ENCODE measurements at regions of chr9 and their contacts with region 1.

Region 1: GRCh38 chr9:87201351-87201751 is 254.0 kb upstream of the GAS1 start:
- DNase-seq: no peak
- ATAC-seq: no peak
- H3K4me3 ChIP-seq: no peak overlapping the region
- H3K4me3 Mint-ChIP-seq: no peak overlapping the region
- H3K27ac ChIP-seq: no peak overlapping the region
- H3K27ac Mint-ChIP-seq: no peak overlapping the region
- H3K4me1 ChIP-seq: no peaks in the 10 kb centered on the region
- H3K4me1 Mint-ChIP-seq: no peaks in the 10 kb centered on the region
- H3K27me3 ChIP-seq: peaks cover 4 to 7% of the 10 kb centered on the region in 2 experiments
- H3K27me3 Mint-ChIP-seq: peaks cover 16% of the 10 kb centered on the region
- CTCF ChIP-seq: no peak

Region 2: GRCh38 chr9:86749894-86750255 is 451.5 kb before region 1 on chr9:
- CTCF ChIA-PET with region 1: no interaction called
- POLR2A ChIA-PET with region 1: no interaction called
- intact Hi-C with region 1: loop called in 1 of 2 experiments (anchors 5 kb)
- DNase-seq: no peak
- ATAC-seq: no peak
- H3K4me3 ChIP-seq: no peak overlapping the region
- H3K4me3 Mint-ChIP-seq: no peak overlapping the region
- H3K27ac ChIP-seq: no peak overlapping the region
- H3K27ac Mint-ChIP-seq: no peak overlapping the region
- H3K4me1 ChIP-seq: no peaks in the 10 kb centered on the region
- H3K4me1 Mint-ChIP-seq: no peaks in the 10 kb centered on the region
- H3K27me3 ChIP-seq: no peaks in the 10 kb centered on the region
- H3K27me3 Mint-ChIP-seq: peaks cover 5% of the 10 kb centered on the region
- CTCF ChIP-seq: no peak

Region 3: DNA sequence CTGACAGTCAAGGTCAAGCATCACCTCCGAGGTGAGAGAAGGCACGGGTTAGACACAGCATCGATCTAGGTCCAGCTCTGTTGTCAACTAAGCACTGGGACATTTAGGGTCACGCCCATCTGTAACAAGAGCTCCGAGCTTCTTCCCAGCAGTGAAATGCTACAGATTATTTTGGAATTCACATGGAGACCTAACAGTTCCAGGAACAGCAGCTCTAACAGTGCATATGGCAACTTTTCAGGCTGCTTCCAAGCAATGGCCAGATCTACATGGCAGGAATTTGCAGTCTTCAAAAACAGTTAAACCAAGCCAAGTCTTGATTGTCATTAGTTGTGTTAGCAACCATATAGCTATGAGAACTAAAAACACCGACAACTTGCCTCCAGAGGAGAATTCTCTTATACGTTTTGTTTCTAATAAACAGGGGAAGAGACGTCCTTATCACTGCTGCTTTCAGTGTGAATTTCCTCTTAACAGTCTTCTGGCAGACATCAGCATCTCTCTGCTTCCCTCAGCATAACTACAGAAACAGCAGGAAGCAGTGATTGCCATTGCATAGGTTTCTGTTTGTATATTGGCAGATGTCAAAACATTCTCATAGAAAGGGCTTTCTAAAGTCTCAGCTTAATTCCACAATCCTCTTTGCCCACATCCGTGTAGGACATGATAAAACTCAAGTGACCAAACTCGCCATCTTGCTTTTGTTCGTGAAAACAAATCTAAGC is 54.2 kb after region 1 on chr9:
- CTCF ChIA-PET with region 1: no interaction called
- POLR2A ChIA-PET with region 1: no interaction called
- intact Hi-C with region 1: no loop called
- DNase-seq: no peak
- ATAC-seq: no peak
- H3K4me3 ChIP-seq: no peak overlapping the region
- H3K4me3 Mint-ChIP-seq: no peak overlapping the region
- H3K27ac ChIP-seq: no peak overlapping the region
- H3K27ac Mint-ChIP-seq: no peak overlapping the region
- H3K4me1 ChIP-seq: no peaks in the 10 kb centered on the region
- H3K4me1 Mint-ChIP-seq: no peaks in the 10 kb centered on the region
- H3K27me3 ChIP-seq: no peaks in the 10 kb centered on the region
- H3K27me3 Mint-ChIP-seq: peaks cover 3% of the 10 kb centered on the region
- CTCF ChIP-seq: no peak